Esophagus squamous epithelium (tissue), 5 donors: ENCODE measurements at regions of chr10 and their contacts with region 1.

Region 1: GRCh38 chr10:72337020-72337629 is 17.6 kb downstream of the DNAJB12 start:
- DNase-seq: no peak
- H3K4me3 ChIP-seq: no peak overlapping the region
- H3K27ac ChIP-seq: peak overlapping the region; percentile 1 to 94 (median 93)
- H3K4me1 ChIP-seq: peaks cover 45 to 73% (median 54%) of the 10 kb centered on the region in 3 donors
- H3K27me3 ChIP-seq: no peaks in the 10 kb centered on the region
- CTCF ChIP-seq: peak; percentile 96 to 98 (median 98)
- POLR2A ChIP-seq: no peak

Region 2: DNA sequence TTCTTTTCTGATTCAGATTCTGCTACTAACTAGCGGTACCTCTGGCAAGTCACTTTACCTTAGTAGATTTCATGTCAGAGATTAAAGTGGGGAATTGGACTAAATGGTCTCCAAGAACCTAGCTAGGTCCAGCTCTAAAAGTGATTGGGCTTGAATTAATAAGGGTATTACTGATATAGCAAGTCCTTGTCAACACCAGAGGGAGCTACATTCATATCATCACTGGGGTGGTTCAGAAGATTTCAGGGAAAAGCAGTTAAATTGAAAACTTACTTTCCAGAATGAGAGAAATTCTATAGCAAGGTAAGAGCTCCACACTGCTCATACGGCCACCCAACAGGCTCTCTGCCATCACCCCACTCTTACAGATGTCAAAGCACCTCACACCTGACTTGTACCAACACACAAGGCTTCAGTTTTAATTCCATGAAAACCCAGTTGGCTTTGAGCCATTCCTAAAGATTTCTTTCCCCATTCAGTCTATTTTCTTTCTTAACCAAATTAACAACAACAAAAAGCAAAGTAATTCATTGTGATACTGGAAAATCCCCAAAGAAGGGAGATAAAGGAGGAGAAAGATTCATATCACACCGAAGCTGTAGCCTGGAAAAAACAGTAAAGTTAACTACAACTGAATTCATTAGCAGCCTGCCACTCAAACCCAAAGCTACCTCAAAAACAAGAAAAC is 210.8 kb before region 1 on chr10:
- intact Hi-C with region 1: loop called (anchors 10 kb)
- DNase-seq: no peak
- H3K4me3 ChIP-seq: no peak overlapping the region
- H3K27ac ChIP-seq: no peak overlapping the region
- H3K4me1 ChIP-seq: no peaks in the 10 kb centered on the region
- H3K27me3 ChIP-seq: no peaks in the 10 kb centered on the region
- CTCF ChIP-seq: peak; percentile 17 to 59 (median 40)
- POLR2A ChIP-seq: no peak

Region 3: DNA sequence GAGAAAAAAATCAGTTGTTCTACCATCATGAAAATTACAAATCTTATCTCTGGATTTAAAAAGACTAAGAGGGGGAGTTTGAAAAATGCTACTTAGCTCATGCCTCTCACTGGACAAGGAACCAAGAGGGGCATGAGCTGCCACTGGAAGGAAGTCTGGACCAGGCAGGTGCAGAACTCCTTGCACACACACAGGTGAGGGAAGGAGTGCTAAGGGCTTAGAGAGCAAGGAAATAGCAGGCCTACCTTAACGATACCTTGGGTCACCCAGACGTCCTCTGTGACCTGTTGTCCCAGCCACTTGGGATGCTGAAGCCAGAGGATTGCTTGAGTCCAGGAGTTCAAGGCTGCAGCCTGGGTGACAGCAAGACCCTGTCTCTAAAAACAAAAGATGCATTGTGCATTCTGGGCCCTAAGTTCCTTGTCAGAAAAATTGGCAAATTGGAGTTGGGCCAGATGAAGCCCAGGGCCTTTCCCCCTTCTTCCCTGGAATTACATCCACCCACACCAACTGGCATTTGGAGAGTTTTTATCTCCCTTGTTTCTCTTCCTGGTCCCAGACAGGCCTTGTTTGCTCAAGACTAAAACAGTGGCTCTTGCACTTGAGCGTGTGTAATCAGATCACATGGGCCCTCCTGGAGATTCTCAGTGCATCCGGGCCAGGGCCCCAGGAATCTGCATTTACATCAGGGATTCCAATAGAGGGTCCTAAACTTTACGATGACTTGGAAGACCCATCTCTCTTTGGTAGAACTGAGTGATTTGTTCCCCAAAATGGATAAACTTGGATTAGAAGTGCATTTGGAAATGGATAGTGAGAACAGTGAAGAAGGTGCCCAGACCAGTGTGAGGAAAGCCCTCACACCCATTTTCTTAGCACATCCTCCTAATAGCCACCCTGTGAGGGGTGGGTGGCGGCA is 60.4 kb before region 1 on chr10:
- intact Hi-C with region 1: loop called (anchors 2 kb)
- DNase-seq: no peak
- H3K4me3 ChIP-seq: peak overlapping the region; percentile 84 to 98 (median 88)
- H3K27ac ChIP-seq: peak overlapping the region; percentile 96 to 100 (median 98)
- H3K4me1 ChIP-seq: peaks cover 15 to 43% (median 24%) of the 10 kb centered on the region in 3 donors
- H3K27me3 ChIP-seq: no peaks in the 10 kb centered on the region
- CTCF ChIP-seq: no peak
- POLR2A ChIP-seq: no peak